Heart left ventricle (tissue), 16 donors: ENCODE measurements at regions of chr12 and their contacts with region 1.

Region 1: GRCh38 chr12:32533971-32534590 is 134.7 kb downstream of the FGD4 start:
- DNase-seq: peak in 4 of 5 donors; percentile 51 to 60 (median 58)
- ATAC-seq: peak; percentile 82 to 92 (median 87)
- H3K4me3 ChIP-seq: peak overlapping the region; percentile 12 to 64 (median 54)
- H3K27ac ChIP-seq: peak overlapping the region; percentile 50 to 85 (median 72)
- H3K4me1 ChIP-seq: peaks cover 0 to 70% (median 43%) of the 10 kb centered on the region in 12 donors
- H3K27me3 ChIP-seq: no peaks in the 10 kb centered on the region
- CTCF ChIP-seq: no peak
- POLR2A ChIP-seq: peak in 1 of 2 donors; percentile 50

Region 2: GRCh38 chr12:32482226-32482625 is 51.9 kb before region 1 on chr12:
- intact Hi-C with region 1: loop called in 2 of 10 experiments (anchors 5 to 10 kb)
- DNase-seq: no peak
- ATAC-seq: peak; percentile 46 to 70 (median 56)
- H3K4me3 ChIP-seq: peak overlapping the region in 1 of 12 donors; percentile 4
- H3K27ac ChIP-seq: peak overlapping the region; percentile 15 to 92 (median 50)
- H3K4me1 ChIP-seq: peaks cover 0 to 43% (median 29%) of the 10 kb centered on the region in 12 donors
- H3K27me3 ChIP-seq: no peaks in the 10 kb centered on the region
- CTCF ChIP-seq: no peak
- POLR2A ChIP-seq: no peak

Region 3: GRCh38 chr12:32501835-32502333 is 32.2 kb before region 1 on chr12:
- intact Hi-C with region 1: loop called in 2 of 10 experiments (anchors 5 kb)
- DNase-seq: peak in 3 of 5 donors; percentile 22 to 42 (median 36)
- ATAC-seq: peak; percentile 29 to 71 (median 60)
- H3K4me3 ChIP-seq: peak overlapping the region in 10 of 12 donors; percentile 4 to 60 (median 41)
- H3K27ac ChIP-seq: peak overlapping the region in 10 of 12 donors; percentile 36 to 85 (median 68)
- H3K4me1 ChIP-seq: peaks cover 7 to 88% (median 53%) of the 10 kb centered on the region in 12 donors
- H3K27me3 ChIP-seq: no peaks in the 10 kb centered on the region
- CTCF ChIP-seq: no peak
- POLR2A ChIP-seq: no peak

Region 4: GRCh38 chr12:32659908-32660440 is 125.9 kb after region 1 on chr12:
- intact Hi-C with region 1: loop called in 1 of 10 experiments (anchors 10 kb)
- DNase-seq: no peak
- ATAC-seq: no peak
- H3K4me3 ChIP-seq: no peak overlapping the region
- H3K27ac ChIP-seq: peak overlapping the region in 10 of 12 donors; percentile 4 to 69 (median 48)
- H3K4me1 ChIP-seq: peaks cover 0 to 17% (median 7%) of the 10 kb centered on the region in 12 donors
- H3K27me3 ChIP-seq: no peaks in the 10 kb centered on the region
- CTCF ChIP-seq: no peak
- POLR2A ChIP-seq: no peak